HEK293 (cell line): ENCODE measurements at regions of chr11 and their contacts with region 1.

Region 1: DNA sequence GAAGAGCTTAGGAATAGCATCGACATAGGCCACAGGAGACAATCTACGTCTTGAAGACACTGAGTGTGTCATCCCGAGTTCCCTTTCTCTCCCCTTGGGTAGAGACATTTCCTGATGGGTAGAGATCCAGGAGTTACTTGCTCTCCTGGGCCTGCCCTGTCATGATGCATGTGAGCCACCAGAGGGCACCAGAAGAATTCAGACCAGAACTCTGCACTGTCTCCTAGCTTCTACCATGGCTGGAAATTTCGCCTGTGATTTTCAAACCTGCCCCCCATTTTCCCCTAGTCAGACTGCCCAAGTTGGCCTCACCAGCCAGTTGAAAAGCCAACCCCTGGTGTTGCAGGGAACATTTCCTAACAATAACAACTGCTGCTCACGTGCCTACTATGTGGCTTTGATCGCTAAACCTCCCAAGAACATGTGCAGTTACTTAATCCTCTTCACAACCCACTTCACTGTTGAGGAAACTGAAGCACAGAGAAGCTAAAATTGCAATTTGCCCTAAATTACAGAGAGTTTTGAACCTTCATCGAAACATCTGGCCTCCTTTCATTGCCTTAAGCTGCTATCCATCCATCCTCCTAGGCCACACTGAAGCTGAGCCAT is 47.2 kb downstream of the C11orf58 start:
- H3K4me3 ChIP-seq: no peak overlapping the region
- H3K27ac ChIP-seq: no peak overlapping the region
- H3K4me1 ChIP-seq: no peaks in the 10 kb centered on the region
- CTCF ChIP-seq: peak; percentile 54; the same call in 1 of the 2 replicates

Region 2: GRCh38 chr11:16448123-16448717 is 337.4 kb before region 1 on chr11:
- CTCF ChIA-PET with region 1: no interaction called
- POLR2A ChIA-PET with region 1: no interaction called
- H3K4me3 ChIP-seq: no peak overlapping the region
- H3K27ac ChIP-seq: no peak overlapping the region
- H3K4me1 ChIP-seq: no peaks in the 10 kb centered on the region
- CTCF ChIP-seq: no peak

Region 3: GRCh38 chr11:16632295-16633200 is 153.1 kb before region 1 on chr11:
- CTCF ChIA-PET with region 1: interaction called, 11 read pairs
- POLR2A ChIA-PET with region 1: no interaction called
- H3K4me3 ChIP-seq: no peak overlapping the region; the same call in 1 of the 2 replicates
- H3K27ac ChIP-seq: no peak overlapping the region
- H3K4me1 ChIP-seq: no peaks in the 10 kb centered on the region
- CTCF ChIP-seq: no peak

Region 4: DNA sequence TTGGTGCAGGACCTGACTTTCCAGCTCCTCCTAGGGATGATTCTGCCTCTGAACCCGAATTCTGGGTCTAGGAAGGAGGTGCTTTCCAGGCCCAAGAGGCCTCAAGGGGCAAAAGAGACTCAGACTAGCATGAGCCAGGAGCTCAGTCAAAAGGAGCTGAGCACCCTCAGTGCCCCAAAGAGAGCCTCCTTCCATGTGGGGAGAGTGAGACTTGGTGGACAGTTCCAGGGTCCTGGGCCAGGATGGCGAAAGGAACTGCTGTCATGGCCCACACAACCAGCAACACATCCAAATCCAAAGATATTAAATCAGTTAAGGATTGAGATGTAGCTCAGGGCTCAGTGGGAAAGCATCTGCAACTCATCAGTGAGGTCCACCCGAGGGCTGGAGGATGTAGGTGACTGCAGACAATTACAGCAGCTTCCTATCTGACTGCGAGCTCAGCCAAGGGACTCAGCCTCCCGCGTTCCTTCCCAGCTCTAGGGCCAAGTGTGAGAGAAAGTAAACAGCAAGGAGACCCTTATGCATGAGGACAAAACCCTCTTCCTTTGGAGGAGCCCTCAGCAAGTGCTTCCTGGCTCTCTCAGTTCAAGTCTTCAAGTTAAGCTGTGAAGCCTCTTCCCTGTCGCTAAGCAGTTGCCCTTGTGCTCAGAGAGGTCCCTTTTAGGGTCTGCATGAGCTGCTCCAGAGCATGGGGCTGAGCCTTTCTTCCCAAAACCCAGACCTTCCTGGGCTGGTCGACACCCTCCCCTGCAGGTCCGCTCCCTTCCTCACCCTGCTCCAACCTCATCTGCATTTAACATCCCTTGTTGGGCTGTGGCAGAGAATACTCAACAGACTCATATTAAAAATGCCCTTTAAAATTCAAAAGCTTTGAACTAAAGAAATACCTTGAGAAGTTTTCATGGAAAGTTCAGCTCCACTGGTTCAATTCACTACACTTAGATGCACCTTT is 11.4 kb before region 1 on chr11:
- CTCF ChIA-PET with region 1: interaction called, 32 read pairs
- POLR2A ChIA-PET with region 1: no interaction called
- H3K4me3 ChIP-seq: no peak overlapping the region
- H3K27ac ChIP-seq: no peak overlapping the region
- H3K4me1 ChIP-seq: no peaks in the 10 kb centered on the region
- CTCF ChIP-seq: no peak

Region 5: GRCh38 chr11:16909359-16910035 is 123.9 kb after region 1 on chr11:
- CTCF ChIA-PET with region 1: no interaction called
- POLR2A ChIA-PET with region 1: no interaction called
- H3K4me3 ChIP-seq: no peak overlapping the region
- H3K27ac ChIP-seq: no peak overlapping the region
- H3K4me1 ChIP-seq: peaks cover 6% of the 10 kb centered on the region; the same call in 1 of the 2 replicates
- CTCF ChIP-seq: no peak